Endothelial cell of umbilical vein (primary cell): ENCODE measurements at regions of chr20 and their contacts with region 1.

Region 1: GRCh38 chr20:41057999-41058896 is 29.6 kb downstream of the TOP1 start:
- DNase-seq: peak; percentile 71
- H3K4me3 ChIP-seq: no peak overlapping the region
- H3K27ac ChIP-seq: peak overlapping the region; percentile 30
- H3K4me1 ChIP-seq: peaks cover 30% of the 10 kb centered on the region
- H3K27me3 ChIP-seq: no peaks in the 10 kb centered on the region
- CTCF ChIP-seq: no peak
- POLR2A ChIP-seq: no peak

Region 2: DNA sequence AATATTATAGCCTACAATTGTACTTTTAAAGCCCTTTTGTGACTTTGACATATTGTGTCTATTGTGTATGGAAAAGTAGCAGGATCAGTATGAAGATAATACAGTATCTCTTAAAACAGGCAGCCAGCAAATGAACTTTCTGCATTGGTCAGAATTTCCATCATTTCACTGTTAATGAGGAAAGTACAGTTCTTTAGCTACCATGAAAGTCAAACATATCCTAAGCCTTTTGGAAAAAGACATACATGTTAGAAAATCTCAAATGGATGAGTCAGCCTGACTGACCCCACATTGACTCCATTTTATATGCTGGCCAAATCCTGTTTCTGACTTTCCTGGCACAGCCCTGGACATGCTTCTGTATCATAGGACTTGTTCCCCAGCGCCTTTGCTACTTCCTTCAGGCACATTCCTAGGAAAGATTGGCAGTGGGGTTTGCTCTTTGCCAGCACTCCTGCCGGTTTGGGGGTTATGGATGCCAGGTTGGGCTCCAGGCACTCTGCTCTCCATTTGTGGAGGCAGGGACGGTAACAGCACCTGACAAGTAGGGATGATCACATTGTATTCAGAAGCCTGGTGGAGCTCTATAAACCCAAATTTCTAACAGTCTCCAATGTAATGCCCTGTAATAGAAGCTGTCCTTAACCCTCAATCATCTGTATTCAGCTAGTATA is 14.1 kb after region 1 on chr20:
- CTCF ChIA-PET with region 1: interaction called, 8 read pairs
- POLR2A ChIA-PET with region 1: no interaction called
- dilution Hi-C with region 1: no loop called
- intact Hi-C with region 1: loop called (anchors 2 kb)
- DNase-seq: peak; percentile 93
- H3K4me3 ChIP-seq: peak overlapping the region in 1 of 3 experiments; percentile 30
- H3K27ac ChIP-seq: peak overlapping the region; percentile 83
- H3K4me1 ChIP-seq: peaks cover 68% of the 10 kb centered on the region
- H3K27me3 ChIP-seq: no peaks in the 10 kb centered on the region
- CTCF ChIP-seq: no peak
- POLR2A ChIP-seq: no peak